CD8-positive, alpha-beta T cell (primary cell): ENCODE measurements at regions of chr4 and their contacts with region 1.

Region 1: GRCh38 chr4:147096667-147097604 is 151.3 kb upstream of the TTC29 start:
- DNase-seq: peak in 2 of 9 experiments; percentile 54 to 66
- ATAC-seq: no peak
- H3K4me3 ChIP-seq: no peak overlapping the region
- H3K4me3 Mint-ChIP-seq: no peak overlapping the region
- H3K27ac ChIP-seq: no peak overlapping the region
- H3K27ac Mint-ChIP-seq: no peak overlapping the region
- H3K4me1 ChIP-seq: no peaks in the 10 kb centered on the region
- H3K4me1 Mint-ChIP-seq: no peaks in the 10 kb centered on the region
- H3K27me3 ChIP-seq: no peaks in the 10 kb centered on the region
- H3K27me3 Mint-ChIP-seq: peaks cover 27% of the 10 kb centered on the region
- CTCF ChIP-seq: peak; percentile 89

Region 2: GRCh38 chr4:145956288-145956890 is 1140.5 kb before region 1 on chr4:
- CTCF ChIA-PET with region 1: no interaction called
- POLR2A ChIA-PET with region 1: no interaction called
- intact Hi-C with region 1: loop called in 1 of 2 experiments (anchors 10 kb)
- DNase-seq: peak in 7 of 9 experiments; percentile 9 to 68 (median 33)
- ATAC-seq: peak; percentile 72
- H3K4me3 ChIP-seq: no peak overlapping the region
- H3K4me3 Mint-ChIP-seq: no peak overlapping the region
- H3K27ac ChIP-seq: no peak overlapping the region
- H3K27ac Mint-ChIP-seq: no peak overlapping the region
- H3K4me1 ChIP-seq: no peaks in the 10 kb centered on the region
- H3K4me1 Mint-ChIP-seq: no peaks in the 10 kb centered on the region
- H3K27me3 ChIP-seq: no peaks in the 10 kb centered on the region
- H3K27me3 Mint-ChIP-seq: peaks cover 2% of the 10 kb centered on the region
- CTCF ChIP-seq: peak; percentile 71

Region 3: GRCh38 chr4:146342600-146343192 is 754.2 kb before region 1 on chr4:
- CTCF ChIA-PET with region 1: interaction called, 49 read pairs
- POLR2A ChIA-PET with region 1: no interaction called
- intact Hi-C with region 1: loop called (anchors 1 kb)
- DNase-seq: peak in 4 of 9 experiments; percentile 7 to 57 (median 34)
- ATAC-seq: no peak
- H3K4me3 ChIP-seq: no peak overlapping the region
- H3K4me3 Mint-ChIP-seq: no peak overlapping the region
- H3K27ac ChIP-seq: no peak overlapping the region
- H3K27ac Mint-ChIP-seq: no peak overlapping the region
- H3K4me1 ChIP-seq: no peaks in the 10 kb centered on the region
- H3K4me1 Mint-ChIP-seq: peaks cover 2% of the 10 kb centered on the region
- H3K27me3 ChIP-seq: no peaks in the 10 kb centered on the region
- H3K27me3 Mint-ChIP-seq: no peaks in the 10 kb centered on the region
- CTCF ChIP-seq: peak; percentile 77

Region 4: GRCh38 chr4:147025042-147025441 is 71.9 kb before region 1 on chr4:
- CTCF ChIA-PET with region 1: interaction called, 62 read pairs
- POLR2A ChIA-PET with region 1: no interaction called
- intact Hi-C with region 1: no loop called
- DNase-seq: no peak
- ATAC-seq: no peak
- H3K4me3 ChIP-seq: no peak overlapping the region
- H3K4me3 Mint-ChIP-seq: no peak overlapping the region
- H3K27ac ChIP-seq: no peak overlapping the region
- H3K27ac Mint-ChIP-seq: no peak overlapping the region
- H3K4me1 ChIP-seq: no peaks in the 10 kb centered on the region
- H3K4me1 Mint-ChIP-seq: no peaks in the 10 kb centered on the region
- H3K27me3 ChIP-seq: no peaks in the 10 kb centered on the region
- H3K27me3 Mint-ChIP-seq: no peaks in the 10 kb centered on the region
- CTCF ChIP-seq: no peak